ENCODE measurements at regions of chr11 and their contacts with region 1.

Region 1: DNA sequence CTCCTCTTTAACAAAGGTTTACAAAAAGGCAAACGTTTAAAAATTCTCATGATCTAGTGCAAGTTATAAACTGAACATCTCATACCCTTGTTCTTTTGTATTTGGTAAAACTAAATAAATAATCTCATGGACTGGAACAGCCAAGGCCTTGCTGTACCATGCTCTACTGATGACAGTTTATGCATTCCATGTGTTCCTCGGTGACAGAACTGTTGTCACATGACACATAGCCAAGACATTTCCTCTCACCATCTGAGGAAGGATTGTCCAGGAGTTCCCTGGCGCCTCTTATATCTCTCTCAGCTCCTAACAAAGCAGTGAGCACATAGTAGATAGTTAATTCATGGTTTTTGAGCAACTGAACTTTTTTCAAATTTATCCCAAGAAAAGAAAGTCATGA is 12.6 kb downstream of the CCDC83 start:
- DNase-seq: no peak
- ATAC-seq: no peak
- H3K4me3 Mint-ChIP-seq: no peak overlapping the region
- H3K27ac Mint-ChIP-seq: no peak overlapping the region
- H3K4me1 Mint-ChIP-seq: no peaks in the 10 kb centered on the region
- H3K27me3 Mint-ChIP-seq: no peaks in the 10 kb centered on the region
- CTCF ChIP-seq: no peak

Region 2: GRCh38 chr11:86421946-86422345 is 554.2 kb after region 1 on chr11:
- CTCF ChIA-PET with region 1: no interaction called
- POLR2A ChIA-PET with region 1: no interaction called
- intact Hi-C with region 1: loop called (anchors 10 kb)
- DNase-seq: no peak
- ATAC-seq: no peak
- H3K4me3 Mint-ChIP-seq: no peak overlapping the region
- H3K27ac Mint-ChIP-seq: no peak overlapping the region
- H3K4me1 Mint-ChIP-seq: peaks cover 5% of the 10 kb centered on the region
- H3K27me3 Mint-ChIP-seq: no peaks in the 10 kb centered on the region
- CTCF ChIP-seq: no peak